Mammary epithelial cell (primary cell): ENCODE measurements at regions of chr4 and their contacts with region 1.

Region 1: DNA sequence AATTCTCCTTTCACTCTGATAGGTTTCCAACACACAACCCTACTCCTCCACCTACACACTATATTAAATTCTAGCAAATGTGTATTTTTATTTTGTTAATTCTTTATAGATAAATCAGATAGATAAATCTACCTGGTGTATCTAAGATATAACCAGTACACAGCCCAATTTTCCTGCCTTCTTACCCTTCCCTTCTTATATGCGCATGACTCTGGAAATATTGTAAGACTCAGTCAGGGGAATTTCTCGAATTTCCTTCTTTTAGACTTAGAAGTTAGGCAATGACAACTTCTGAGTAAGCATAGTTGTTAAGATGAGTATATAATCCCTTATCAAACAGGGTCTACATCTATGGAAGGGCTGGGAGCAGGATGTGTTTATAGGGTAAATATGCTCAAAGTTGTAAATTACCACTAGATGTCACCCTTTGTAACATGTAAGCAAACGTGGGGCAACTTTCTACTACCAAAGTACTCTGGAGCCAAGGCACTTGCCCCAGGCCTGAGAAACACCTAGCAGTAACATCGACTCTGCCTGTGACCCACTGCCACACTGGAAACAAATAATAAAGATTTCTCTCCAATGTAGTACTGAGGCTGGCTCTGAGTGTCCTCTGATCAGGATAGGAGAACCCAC is 444.7 kb downstream of the IQCM start:
- DNase-seq: peak; percentile 32
- H3K4me3 ChIP-seq: no peak overlapping the region
- H3K27ac ChIP-seq: no peak overlapping the region
- H3K4me1 ChIP-seq: no peaks in the 10 kb centered on the region
- H3K27me3 ChIP-seq: no peaks in the 10 kb centered on the region
- CTCF ChIP-seq: peak; percentile 44 to 57

Region 2: DNA sequence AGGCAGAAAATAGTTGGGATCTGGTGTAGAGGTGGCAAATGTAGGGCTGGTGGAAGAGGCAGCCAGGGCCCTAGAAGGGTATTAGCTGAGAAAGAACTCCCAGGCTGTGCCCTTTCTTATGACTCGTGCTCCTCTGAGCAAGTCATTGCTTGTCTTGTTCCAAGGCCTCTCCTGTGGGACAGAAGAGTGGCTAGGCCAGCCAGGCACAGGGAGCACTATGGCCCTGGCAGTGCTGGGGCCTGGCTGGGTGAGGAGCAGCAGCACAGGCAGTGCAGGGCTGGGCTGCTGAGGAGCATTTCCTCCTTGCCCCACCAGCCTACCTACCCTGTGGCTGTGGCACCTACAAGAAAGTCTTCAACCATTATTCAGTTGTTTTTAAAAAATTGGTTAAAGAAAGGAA is 630.2 kb before region 1 on chr4:
- CTCF ChIA-PET with region 1: no interaction called
- dilution Hi-C with region 1: no loop called
- in situ Hi-C with region 1: no loop called
- intact Hi-C with region 1: no loop called
- DNase-seq: peak; percentile 42
- H3K4me3 ChIP-seq: no peak overlapping the region
- H3K27ac ChIP-seq: no peak overlapping the region
- H3K4me1 ChIP-seq: peaks cover 7% of the 10 kb centered on the region
- H3K27me3 ChIP-seq: no peaks in the 10 kb centered on the region
- CTCF ChIP-seq: no peak

Region 3: GRCh38 chr4:149595500-149595899 is 224.6 kb after region 1 on chr4:
- CTCF ChIA-PET with region 1: no interaction called
- dilution Hi-C with region 1: no loop called
- in situ Hi-C with region 1: no loop called
- intact Hi-C with region 1: no loop called
- DNase-seq: no peak
- H3K4me3 ChIP-seq: no peak overlapping the region
- H3K27ac ChIP-seq: no peak overlapping the region
- H3K4me1 ChIP-seq: no peaks in the 10 kb centered on the region
- H3K27me3 ChIP-seq: no peaks in the 10 kb centered on the region
- CTCF ChIP-seq: no peak

Region 4: DNA sequence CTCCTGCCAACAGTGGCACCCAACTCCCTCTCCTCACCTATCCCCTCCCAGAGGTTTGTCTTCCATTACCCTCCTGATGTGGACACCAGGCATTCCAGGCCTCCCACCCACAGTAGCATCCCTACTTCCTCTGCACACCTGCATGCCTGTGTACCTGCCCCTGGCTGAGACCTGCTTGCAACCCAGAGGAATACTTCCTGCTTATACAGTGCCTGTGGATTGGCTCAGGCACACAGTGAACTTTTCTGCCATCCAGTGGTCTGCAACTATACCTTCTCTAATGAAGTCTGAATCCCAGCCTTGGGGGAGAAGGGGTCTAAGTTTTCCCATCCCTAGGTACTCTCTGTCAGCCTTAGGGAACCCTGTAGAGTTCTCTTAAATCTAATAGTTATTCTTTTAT is 274.9 kb after region 1 on chr4:
- CTCF ChIA-PET with region 1: no interaction called
- dilution Hi-C with region 1: no loop called
- in situ Hi-C with region 1: no loop called
- intact Hi-C with region 1: loop called (anchors 10 kb)
- DNase-seq: no peak
- H3K4me3 ChIP-seq: no peak overlapping the region
- H3K27ac ChIP-seq: no peak overlapping the region
- H3K4me1 ChIP-seq: no peaks in the 10 kb centered on the region
- H3K27me3 ChIP-seq: no peaks in the 10 kb centered on the region
- CTCF ChIP-seq: peak in 1 of 2 donors; percentile 29

Region 5: GRCh38 chr4:149891426-149891825 is 520.5 kb after region 1 on chr4:
- CTCF ChIA-PET with region 1: interaction called, 4 read pairs
- dilution Hi-C with region 1: no loop called
- in situ Hi-C with region 1: loop called (anchors 5 to 10 kb)
- intact Hi-C with region 1: loop called (anchors 1 kb)
- DNase-seq: no peak
- H3K4me3 ChIP-seq: no peak overlapping the region
- H3K27ac ChIP-seq: no peak overlapping the region
- H3K4me1 ChIP-seq: no peaks in the 10 kb centered on the region
- H3K27me3 ChIP-seq: no peaks in the 10 kb centered on the region
- CTCF ChIP-seq: no peak

Region 6: DNA sequence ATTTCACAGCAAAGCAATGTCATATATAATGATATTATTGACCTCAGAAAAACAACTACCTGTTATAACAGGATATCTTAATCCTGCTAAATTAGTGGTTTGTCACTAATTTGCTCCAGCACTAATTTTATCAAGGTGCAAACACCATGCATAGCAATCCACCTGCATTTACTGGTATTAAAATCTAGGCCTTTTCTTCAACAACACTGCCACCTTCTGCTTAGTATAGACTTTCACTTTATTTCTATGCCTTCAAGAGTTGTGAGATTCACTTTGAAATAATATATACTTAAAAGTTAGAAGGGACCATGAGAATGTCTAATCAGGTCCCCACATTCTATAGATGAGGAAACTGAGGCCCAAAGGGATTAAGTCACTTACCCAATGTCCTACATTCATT is 526.9 kb after region 1 on chr4:
- CTCF ChIA-PET with region 1: interaction called, 4 read pairs
- dilution Hi-C with region 1: no loop called
- in situ Hi-C with region 1: loop called (anchors 5 to 10 kb)
- intact Hi-C with region 1: loop called (anchors 1 kb)
- DNase-seq: peak; percentile 6
- H3K4me3 ChIP-seq: no peak overlapping the region
- H3K27ac ChIP-seq: no peak overlapping the region
- H3K4me1 ChIP-seq: no peaks in the 10 kb centered on the region
- H3K27me3 ChIP-seq: peaks cover 2% of the 10 kb centered on the region
- CTCF ChIP-seq: peak in 1 of 2 donors; percentile 49

Region 7: DNA sequence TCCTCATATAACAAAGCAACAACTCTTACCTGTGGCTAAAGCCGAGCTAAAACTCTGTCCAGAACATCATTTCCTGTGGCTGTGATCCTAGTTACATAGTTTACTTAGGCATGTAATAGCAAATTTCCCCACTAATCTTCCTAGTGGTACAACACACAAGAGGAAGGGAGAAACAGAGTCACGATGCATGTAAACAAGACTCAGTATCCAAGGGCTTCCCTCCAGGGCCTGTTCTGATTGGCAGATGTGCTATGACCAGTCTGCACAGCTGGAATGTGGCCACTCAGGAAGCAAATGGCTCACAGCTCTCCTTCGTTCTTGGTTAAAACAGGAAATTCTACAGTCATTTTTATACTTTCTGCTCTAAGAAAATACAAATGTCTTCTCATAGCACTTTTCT is 1856.8 kb after region 1 on chr4:
- CTCF ChIA-PET with region 1: no interaction called
- dilution Hi-C with region 1: no loop called
- in situ Hi-C with region 1: no loop called
- intact Hi-C with region 1: no loop called
- DNase-seq: peak; percentile 84
- H3K4me3 ChIP-seq: peak overlapping the region; percentile 0 to 33 (median 14)
- H3K27ac ChIP-seq: peak overlapping the region; percentile 95
- H3K4me1 ChIP-seq: peaks cover 24% of the 10 kb centered on the region
- H3K27me3 ChIP-seq: no peaks in the 10 kb centered on the region
- CTCF ChIP-seq: no peak